ENCODE measurements at regions of chr13 and their contacts with region 1.

Region 1: DNA sequence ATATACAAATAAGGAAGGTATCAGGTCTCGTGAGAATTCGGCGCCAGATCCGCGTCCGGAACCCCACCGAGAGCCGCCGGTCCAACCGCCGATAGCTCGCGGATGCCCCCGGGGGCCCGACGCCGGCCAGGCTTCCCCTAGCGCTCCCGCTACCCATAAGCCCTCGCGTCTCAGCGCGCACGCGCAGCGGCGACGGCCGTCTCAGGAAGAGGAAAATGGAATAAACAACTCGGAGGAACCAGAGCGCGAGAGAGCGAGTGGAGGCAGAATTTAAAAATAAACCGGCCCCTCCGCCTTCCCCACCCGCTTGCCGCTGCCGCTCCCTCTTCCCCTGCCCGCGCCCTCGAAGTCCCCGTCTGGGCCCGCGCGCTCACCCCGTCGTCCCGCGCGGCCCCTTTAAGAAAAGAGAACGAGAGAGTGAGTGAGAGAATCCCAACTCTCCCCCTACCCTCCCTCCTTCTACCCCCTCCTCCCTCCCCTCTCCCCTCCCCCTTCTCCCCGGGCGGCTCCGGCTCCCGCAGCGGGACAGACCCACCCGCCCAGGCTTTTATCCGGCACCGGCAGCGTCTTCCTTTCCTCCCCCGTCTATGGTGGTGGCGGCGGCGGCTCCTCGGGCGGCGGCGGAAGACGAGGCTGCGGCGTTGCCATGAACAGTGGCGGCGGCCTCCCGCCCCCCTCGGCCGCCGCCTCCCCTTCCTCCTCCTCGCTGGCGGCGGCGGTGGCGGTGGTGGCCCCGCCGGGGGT is at the start of gene PAN3:
- DNase-seq: peak; percentile 98
- H3K4me3 Mint-ChIP-seq: peak within 1 kb of the TSS; percentile 88
- H3K27ac Mint-ChIP-seq: peak within 1 kb of the TSS; percentile 95
- H3K4me1 Mint-ChIP-seq: peaks cover 42% of the 10 kb centered on the region
- H3K27me3 Mint-ChIP-seq: no peaks in the 10 kb centered on the region
- total RNA-seq, gene PAN3: 31.2 and 32.7 TPM in 2 replicates

Region 2: DNA sequence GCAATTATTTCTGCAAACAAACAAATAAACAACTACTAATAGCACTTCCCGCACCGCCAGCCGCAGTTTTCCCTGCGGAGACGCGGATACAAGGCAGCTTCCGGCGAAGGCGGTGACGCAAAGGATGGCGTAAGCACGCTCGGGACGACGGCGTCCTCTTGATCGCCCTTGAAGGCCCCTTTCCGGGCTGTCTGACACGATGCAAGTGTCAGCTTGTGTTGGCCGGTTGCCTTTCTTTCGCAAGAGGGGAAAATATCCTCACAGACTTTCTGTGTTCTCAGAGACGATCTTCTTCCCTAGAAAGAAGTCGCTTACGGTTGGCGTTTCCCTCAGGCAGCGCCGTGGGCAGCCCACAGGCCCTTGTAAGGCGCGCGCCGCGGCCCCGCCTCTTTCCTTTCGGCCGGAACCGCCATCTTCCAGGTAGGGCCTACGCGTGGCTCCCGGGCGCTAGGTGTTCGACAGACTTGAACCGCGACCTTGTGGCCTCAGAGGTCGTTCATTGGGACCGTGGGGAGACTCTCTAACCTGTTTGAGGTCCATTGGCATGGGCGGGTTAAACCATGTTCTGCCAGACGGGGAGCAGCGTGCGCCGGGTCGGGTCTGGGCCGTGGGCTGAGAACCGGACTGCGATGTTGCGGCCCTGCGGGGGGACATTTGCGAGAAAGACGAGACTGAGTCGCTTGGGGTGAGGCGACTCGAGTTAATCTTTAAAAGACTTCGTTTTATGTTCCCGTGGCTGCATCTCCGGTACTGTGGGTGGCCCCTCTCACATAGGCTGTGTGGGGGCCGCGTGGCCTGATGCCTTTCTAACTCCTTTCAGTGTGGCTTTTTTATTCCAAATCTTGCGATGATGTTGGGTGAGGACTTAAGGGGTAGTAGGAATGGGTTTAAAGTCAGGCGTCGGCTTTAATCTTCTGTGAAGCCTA is 886.8 kb before region 1 on chr13 and contains the start of gene RPL21:
- intact Hi-C with region 1: loop called (anchors 2 kb)
- DNase-seq: peak; percentile 97
- H3K4me3 Mint-ChIP-seq: peak within 1 kb of the TSS; percentile 100
- H3K27ac Mint-ChIP-seq: peak within 1 kb of the TSS; percentile 99
- H3K4me1 Mint-ChIP-seq: peaks cover 30% of the 10 kb centered on the region
- H3K27me3 Mint-ChIP-seq: no peaks in the 10 kb centered on the region
- total RNA-seq, gene RPL21: 1,100 and 1,185 TPM in 2 replicates

Region 3: DNA sequence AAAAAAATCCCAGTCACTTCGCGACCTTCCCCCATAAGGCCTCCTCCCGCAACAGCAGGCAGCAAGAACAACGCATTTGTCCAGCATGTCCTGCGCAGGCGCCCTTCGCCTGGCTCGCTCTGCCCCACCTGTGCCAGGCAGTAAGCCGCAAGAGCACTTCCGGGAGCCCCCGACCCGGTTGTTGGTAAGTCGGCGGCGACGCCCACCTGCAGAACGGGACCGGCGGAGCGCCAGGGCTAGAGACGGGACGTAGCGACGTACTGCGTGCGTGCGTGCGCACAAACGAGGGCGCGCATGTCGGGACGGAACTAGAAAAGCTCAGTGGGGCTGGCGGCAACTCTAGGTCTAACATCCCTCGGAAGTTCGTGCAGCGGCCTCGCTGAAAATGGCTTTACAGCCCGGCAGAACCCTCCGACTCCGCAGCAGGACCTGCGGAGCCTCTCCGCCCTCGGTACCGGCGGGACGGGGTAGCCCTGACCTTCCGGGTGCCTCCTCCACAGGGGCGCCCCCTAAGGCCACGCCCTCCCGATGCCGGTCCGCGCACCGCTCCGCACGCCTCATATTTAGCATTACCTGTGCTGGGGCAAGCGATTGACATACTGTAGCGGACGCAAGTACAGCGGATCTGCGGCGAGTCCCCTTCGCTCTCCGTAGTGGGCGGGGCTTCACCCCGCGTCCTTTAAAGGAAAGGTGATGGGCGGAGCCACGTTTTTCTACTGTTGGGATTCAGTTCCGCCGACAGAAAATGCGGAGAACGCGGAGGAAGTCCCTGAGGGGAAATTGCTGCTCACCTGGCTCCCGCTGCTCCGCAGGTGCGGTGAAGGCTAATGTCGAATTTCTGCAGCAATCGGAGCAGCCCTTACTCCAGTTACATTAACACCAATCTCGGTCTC is 688.0 kb before region 1 on chr13 and contains the start of gene MTIF3:
- intact Hi-C with region 1: loop called (anchors 1 kb)
- DNase-seq: peak; percentile 99
- H3K4me3 Mint-ChIP-seq: peak within 1 kb of the TSS; percentile 88
- H3K27ac Mint-ChIP-seq: peak within 1 kb of the TSS; percentile 96
- H3K4me1 Mint-ChIP-seq: peaks cover 43% of the 10 kb centered on the region
- H3K27me3 Mint-ChIP-seq: no peaks in the 10 kb centered on the region
- total RNA-seq, gene MTIF3: 28.8 and 30.4 TPM in 2 replicates

Region 4: GRCh38 chr13:28047757-28048388 is 90.3 kb before region 1 on chr13:
- intact Hi-C with region 1: no loop called
- DNase-seq: no peak
- H3K4me3 Mint-ChIP-seq: no peak overlapping the region
- H3K27ac Mint-ChIP-seq: no peak overlapping the region
- H3K4me1 Mint-ChIP-seq: peaks cover 4% of the 10 kb centered on the region
- H3K27me3 Mint-ChIP-seq: peaks cover 8% of the 10 kb centered on the region

Region 5: GRCh38 chr13:28100150-28101121 is 37.7 kb before region 1 on chr13 and contains the start of gene FLT3:
- intact Hi-C with region 1: loop called (anchors 2 kb)
- DNase-seq: peak; percentile 74
- H3K4me3 Mint-ChIP-seq: peak within 1 kb of the TSS; percentile 73
- H3K27ac Mint-ChIP-seq: no peak within 1 kb of the TSS
- H3K4me1 Mint-ChIP-seq: peaks cover 3% of the 10 kb centered on the region
- H3K27me3 Mint-ChIP-seq: peaks cover 63% of the 10 kb centered on the region
- total RNA-seq, gene FLT3: not detected in 2 replicates

Region 6: GRCh38 chr13:28159057-28159456 is 20.9 kb after region 1 on chr13:
- intact Hi-C with region 1: no loop called
- DNase-seq: peak; percentile 37
- H3K4me3 Mint-ChIP-seq: no peak overlapping the region
- H3K27ac Mint-ChIP-seq: no peak overlapping the region
- H3K4me1 Mint-ChIP-seq: peaks cover 2% of the 10 kb centered on the region
- H3K27me3 Mint-ChIP-seq: no peaks in the 10 kb centered on the region

Region 7: GRCh38 chr13:28268800-28269223 is 130.6 kb after region 1 on chr13:
- intact Hi-C with region 1: loop called (anchors 1 kb)
- DNase-seq: peak; percentile 63
- H3K4me3 Mint-ChIP-seq: no peak overlapping the region
- H3K27ac Mint-ChIP-seq: peak overlapping the region; percentile 55
- H3K4me1 Mint-ChIP-seq: peaks cover 13% of the 10 kb centered on the region
- H3K27me3 Mint-ChIP-seq: no peaks in the 10 kb centered on the region

Region 8: GRCh38 chr13:28530729-28531076 is 392.5 kb after region 1 on chr13:
- intact Hi-C with region 1: loop called (anchors 2 kb)
- DNase-seq: no peak
- H3K4me3 Mint-ChIP-seq: no peak overlapping the region
- H3K27ac Mint-ChIP-seq: no peak overlapping the region
- H3K4me1 Mint-ChIP-seq: peaks cover 9% of the 10 kb centered on the region
- H3K27me3 Mint-ChIP-seq: peaks cover 31% of the 10 kb centered on the region